Activated CD4-positive, alpha-beta memory T cell treated with anti-CD3 and anti-CD28 coated beads, Interleukin-2, amount 10 ng/mL, durations not matched to agents 7 days and 5 days (primary cell): ENCODE measurements at regions of chr1 and their contacts with region 1.

Region 1: GRCh38 chr1:54996359-54996868 is 2.3 kb upstream of the BSND start:
- DNase-seq: peak; percentile 90
- H3K4me3 Mint-ChIP-seq: peak overlapping the region; percentile 51
- H3K27ac Mint-ChIP-seq: peak overlapping the region; percentile 94
- H3K4me1 Mint-ChIP-seq: peaks cover 39% of the 10 kb centered on the region
- H3K27me3 Mint-ChIP-seq: peaks cover 39% of the 10 kb centered on the region

Region 2: DNA sequence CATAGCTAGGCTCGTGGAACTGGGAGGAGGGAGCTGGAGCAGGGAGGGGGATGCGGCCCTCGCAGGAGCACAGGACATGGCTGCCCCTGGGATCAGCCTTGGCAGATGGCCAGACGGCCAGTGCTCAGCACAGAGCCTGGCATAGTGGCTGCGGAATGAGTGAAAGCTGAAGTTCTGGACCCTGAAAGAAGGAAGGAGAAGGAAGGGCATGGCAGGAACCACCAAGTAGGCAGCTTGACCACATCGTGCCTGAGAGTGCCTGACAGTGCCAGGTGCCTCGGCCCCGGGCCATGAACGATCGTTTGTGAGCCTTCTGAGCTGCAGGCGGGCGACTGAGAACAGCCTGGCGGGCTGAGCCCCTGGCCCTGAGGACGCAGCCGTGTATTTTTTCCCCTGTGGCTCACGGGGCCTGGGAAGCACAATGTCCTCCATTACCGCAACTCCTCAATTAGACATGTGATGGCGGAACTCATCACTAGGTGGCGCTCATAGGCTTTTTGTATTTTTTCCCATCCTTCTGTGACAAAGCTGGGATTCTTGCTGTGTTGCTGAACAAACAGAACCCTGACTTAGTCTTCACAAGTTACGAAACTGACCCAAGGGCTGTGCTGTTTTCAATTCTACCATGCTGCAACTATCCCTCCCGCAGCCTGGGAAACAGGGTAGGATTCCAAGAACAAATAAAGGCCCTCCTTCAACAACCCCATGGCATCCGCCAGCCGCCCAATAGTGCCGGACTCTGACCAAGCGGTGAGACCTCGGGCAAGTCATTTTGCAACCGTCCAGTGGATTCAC is 45.8 kb before region 1 on chr1:
- CTCF ChIA-PET with region 1: interaction called, 353 read pairs
- POLR2A ChIA-PET with region 1: interaction called, 44 read pairs
- DNase-seq: peak; percentile 70
- H3K4me3 Mint-ChIP-seq: no peak overlapping the region
- H3K27ac Mint-ChIP-seq: peak overlapping the region; percentile 32
- H3K4me1 Mint-ChIP-seq: peaks cover 41% of the 10 kb centered on the region
- H3K27me3 Mint-ChIP-seq: peaks cover 7% of the 10 kb centered on the region

Region 3: DNA sequence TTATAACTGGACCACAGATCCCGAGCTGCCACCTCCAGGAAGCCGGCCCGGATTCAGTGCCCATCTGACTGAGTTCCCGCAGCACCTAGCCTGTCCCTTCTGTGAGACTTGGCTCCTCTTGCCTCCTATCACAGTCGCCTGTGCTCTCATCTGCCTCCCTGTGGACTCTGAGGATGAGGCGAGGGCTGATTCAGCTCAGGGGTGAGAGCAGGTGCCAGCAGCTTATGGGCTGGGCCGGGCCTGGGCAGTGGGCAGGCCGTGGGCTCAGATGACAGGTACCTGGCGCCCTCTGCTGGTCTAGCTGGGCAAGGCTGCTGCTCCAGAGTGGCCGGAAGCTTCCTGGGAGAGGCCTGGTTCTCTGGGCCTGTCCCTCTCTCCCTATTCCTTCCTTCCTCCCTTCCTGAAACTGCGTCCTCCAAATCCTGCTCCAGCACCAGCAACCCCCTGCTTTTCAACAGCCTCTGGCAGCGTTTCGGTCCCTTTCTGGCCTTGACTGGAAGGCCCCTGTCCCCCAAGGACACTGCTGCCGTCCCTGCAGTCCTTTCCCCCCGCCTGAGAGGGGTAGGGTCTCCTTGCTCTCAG is 25.6 kb after region 1 on chr1:
- CTCF ChIA-PET with region 1: interaction called, 26 read pairs
- POLR2A ChIA-PET with region 1: no interaction called
- DNase-seq: peak; percentile 76
- H3K4me3 Mint-ChIP-seq: no peak overlapping the region
- H3K27ac Mint-ChIP-seq: no peak overlapping the region
- H3K4me1 Mint-ChIP-seq: peaks cover 7% of the 10 kb centered on the region
- H3K27me3 Mint-ChIP-seq: peaks cover 10% of the 10 kb centered on the region